Dendritic cell treated with granulocyte-macrophage colony-stimulating factor and Interleukin-4, amounts not matched to agents 40 ng/mL and 50 ng/mL, for 4 days (primary cell): ENCODE measurements at regions of chr2 and their contacts with region 1.

Region 1: DNA sequence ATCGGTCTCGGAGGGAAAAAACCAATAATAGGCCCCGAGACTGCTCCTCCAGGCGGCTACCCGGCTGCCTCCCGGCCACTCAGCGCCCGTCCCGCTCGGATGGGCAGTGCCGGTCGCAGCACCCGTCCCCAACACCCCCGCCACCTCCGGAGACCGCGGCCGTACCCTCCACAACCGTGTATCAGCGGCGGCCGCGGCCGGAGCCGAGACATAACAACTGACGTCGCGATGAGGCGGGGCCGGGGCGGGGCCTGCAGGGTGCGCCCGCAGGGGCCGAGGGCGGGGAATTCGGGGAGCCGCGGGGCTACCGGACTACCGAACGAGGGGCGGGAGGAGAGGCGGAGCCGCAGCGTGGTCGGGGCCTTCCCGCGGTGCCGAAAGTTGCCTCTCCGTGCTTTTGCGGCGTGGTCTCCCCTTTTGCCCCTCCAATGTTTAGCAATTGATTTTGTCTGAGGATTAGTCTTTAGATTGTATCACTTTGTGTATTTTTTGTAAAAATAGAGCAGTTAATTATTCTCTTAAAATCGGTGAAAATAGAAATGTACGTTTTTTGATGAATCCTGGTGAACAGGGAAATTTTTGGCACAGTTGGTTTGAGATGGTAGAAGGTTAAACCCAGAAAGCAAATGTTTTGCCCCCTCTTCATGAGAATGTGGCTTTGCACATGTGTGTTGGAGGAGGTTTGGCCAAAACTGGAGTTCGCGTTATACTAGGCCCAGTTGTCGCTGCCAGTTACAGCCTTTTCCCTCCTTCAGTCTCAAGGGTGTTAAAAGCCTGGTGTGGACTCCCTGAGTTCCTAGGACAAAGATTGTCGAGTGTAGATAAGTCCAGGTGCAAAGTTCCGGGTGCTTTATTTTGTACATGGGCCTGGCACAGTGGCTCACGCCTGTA is at the start of gene RNF103:
- H3K4me3 Mint-ChIP-seq: peak within 1 kb of the TSS; percentile 95
- H3K27ac Mint-ChIP-seq: peak within 1 kb of the TSS; percentile 97
- H3K4me1 Mint-ChIP-seq: peaks cover 22% of the 10 kb centered on the region
- H3K27me3 Mint-ChIP-seq: peaks cover 2% of the 10 kb centered on the region

Region 2: DNA sequence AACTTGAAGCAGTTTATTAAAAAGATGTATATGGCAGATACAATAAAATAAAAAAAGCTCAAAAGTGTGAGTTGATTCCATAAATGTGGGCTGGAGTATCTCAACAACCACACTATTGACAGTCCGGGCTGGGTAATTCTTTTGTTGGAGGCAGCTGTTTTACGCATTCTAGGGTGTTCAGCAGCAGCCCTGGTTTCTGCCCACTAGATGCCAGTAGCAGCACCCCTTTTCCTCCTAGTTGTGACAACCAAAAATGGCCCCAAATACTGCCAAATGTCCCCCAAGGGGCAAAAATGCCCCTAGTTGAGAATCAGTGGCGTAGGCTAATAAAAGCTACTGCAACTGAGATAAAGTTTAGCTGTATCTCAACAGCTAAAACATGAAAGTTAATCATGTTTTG is 105.4 kb before region 1 on chr2:
- intact Hi-C with region 1: loop called (anchors 10 kb)
- H3K4me3 Mint-ChIP-seq: no peak overlapping the region
- H3K27ac Mint-ChIP-seq: no peak overlapping the region
- H3K4me1 Mint-ChIP-seq: no peaks in the 10 kb centered on the region
- H3K27me3 Mint-ChIP-seq: no peaks in the 10 kb centered on the region

Region 3: DNA sequence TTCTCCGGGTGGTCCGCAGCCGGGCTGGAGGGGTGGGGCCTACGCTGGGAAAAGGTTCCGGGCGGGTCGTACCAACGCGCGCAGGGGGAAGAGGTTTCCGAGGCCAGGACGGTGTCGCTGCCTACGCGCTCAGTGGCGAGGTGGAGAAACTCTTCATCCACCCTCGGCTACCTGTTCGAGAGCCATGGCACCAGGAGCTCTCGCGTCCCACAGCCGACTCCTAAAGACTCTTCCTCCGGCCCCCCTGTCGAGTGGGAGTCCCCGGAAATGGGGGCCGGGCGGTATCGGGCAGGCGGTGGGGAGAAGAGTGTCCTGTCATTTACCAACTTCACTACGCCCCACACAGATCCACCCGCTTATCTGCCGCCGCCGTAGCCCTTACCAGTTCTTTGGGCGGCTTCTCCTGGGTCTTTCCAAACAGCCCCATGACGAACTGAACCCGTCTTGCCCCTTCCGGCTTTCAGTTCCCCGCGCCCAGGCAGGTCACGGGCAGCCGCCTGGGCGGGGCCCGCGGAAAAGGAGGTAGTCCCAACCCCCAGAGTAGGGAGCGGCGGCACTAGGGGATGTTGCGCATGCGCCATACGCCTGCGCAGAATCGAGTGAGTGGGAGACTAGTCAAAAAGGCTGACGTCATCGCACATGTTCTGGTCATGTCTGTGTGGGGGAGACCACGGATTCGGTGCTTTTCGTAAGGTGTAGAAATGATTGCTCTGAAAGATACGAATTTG is 60.8 kb before region 1 on chr2 and contains the start of gene CHMP3:
- intact Hi-C with region 1: loop called (anchors 2 kb)
- H3K4me3 Mint-ChIP-seq: peak within 1 kb of the TSS; percentile 94
- H3K27ac Mint-ChIP-seq: peak within 1 kb of the TSS; percentile 100
- H3K4me1 Mint-ChIP-seq: peaks cover 24% of the 10 kb centered on the region
- H3K27me3 Mint-ChIP-seq: no peaks in the 10 kb centered on the region

Region 4: GRCh38 chr2:86661333-86661732 is 37.4 kb after region 1 on chr2:
- intact Hi-C with region 1: no loop called
- H3K4me3 Mint-ChIP-seq: no peak overlapping the region
- H3K27ac Mint-ChIP-seq: no peak overlapping the region
- H3K4me1 Mint-ChIP-seq: no peaks in the 10 kb centered on the region
- H3K27me3 Mint-ChIP-seq: no peaks in the 10 kb centered on the region